Calu3 (cell line): ENCODE measurements at regions of chr12 and their contacts with region 1.

Region 1: GRCh38 chr12:77152623-77153193 is 87.3 kb upstream of the E2F7 start:
- DNase-seq: peak; percentile 12
- H3K4me3 Mint-ChIP-seq: no peak overlapping the region
- H3K27ac Mint-ChIP-seq: no peak overlapping the region
- H3K4me1 Mint-ChIP-seq: no peaks in the 10 kb centered on the region
- H3K27me3 Mint-ChIP-seq: no peaks in the 10 kb centered on the region
- CTCF ChIP-seq: peak; percentile 64

Region 2: GRCh38 chr12:77049767-77050353 is 102.8 kb before region 1 on chr12:
- CTCF ChIA-PET with region 1: interaction called, 5 read pairs
- intact Hi-C with region 1: loop called (anchors 5 kb)
- DNase-seq: peak; percentile 55
- H3K4me3 Mint-ChIP-seq: no peak overlapping the region
- H3K27ac Mint-ChIP-seq: peak overlapping the region; percentile 65
- H3K4me1 Mint-ChIP-seq: peaks cover 31% of the 10 kb centered on the region
- H3K27me3 Mint-ChIP-seq: no peaks in the 10 kb centered on the region
- CTCF ChIP-seq: peak; percentile 69

Region 3: GRCh38 chr12:77104792-77105191 is 47.9 kb before region 1 on chr12:
- CTCF ChIA-PET with region 1: no interaction called
- intact Hi-C with region 1: no loop called
- DNase-seq: peak; percentile 24
- H3K4me3 Mint-ChIP-seq: peak overlapping the region; percentile 40
- H3K27ac Mint-ChIP-seq: peak overlapping the region; percentile 99
- H3K4me1 Mint-ChIP-seq: peaks cover 51% of the 10 kb centered on the region
- H3K27me3 Mint-ChIP-seq: no peaks in the 10 kb centered on the region
- CTCF ChIP-seq: no peak

Region 4: GRCh38 chr12:77324763-77325468 is 172.2 kb after region 1 on chr12:
- CTCF ChIA-PET with region 1: interaction called, 14 read pairs
- intact Hi-C with region 1: loop called (anchors 1 kb)
- DNase-seq: peak; percentile 82
- H3K4me3 Mint-ChIP-seq: peak overlapping the region; percentile 87
- H3K27ac Mint-ChIP-seq: peak overlapping the region; percentile 45
- H3K4me1 Mint-ChIP-seq: peaks cover 9% of the 10 kb centered on the region
- H3K27me3 Mint-ChIP-seq: peaks cover 27% of the 10 kb centered on the region
- CTCF ChIP-seq: peak; percentile 14